Naive thymus-derived CD8-positive, alpha-beta T cell (primary cell): ENCODE measurements at regions of chr15 and their contacts with region 1.

Region 1: DNA sequence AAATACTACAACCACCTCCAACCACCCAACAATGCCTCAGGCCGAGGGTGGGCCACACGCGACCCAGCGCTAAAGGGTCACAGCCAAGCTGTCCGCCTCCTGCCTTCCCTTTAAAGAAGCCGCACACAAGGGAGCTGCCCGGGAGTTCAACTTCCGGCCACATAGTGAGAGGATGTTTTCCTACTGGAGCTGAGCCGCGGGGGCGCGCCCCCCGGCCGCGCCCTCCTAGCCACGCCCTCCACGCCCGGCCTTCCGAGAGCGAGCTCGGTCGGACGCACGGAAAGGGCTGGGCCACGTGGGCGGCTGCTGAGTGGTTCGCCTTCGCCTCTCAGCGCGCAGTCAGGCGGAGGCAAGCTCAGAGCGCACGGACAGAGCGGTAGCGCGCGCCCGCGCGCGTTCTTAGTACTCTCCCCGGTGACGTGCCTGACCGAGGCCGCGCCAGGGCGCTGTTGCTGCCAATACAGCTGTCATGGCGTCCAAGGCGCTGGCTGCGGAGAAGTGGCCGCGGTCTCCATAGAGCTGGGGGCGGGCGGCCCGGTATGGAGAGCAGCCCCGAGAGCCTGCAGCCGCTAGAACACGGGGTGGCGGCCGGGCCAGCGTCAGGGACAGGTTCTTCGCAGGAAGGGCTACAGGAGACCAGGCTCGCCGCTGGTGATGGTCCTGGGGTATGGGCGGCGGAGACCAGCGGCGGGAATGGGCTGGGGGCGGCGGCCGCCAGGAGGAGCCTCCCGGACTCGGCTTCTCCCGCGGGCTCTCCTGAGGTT is at the start of gene MINDY2:
- DNase-seq: peak; percentile 83 to 96 (median 90)
- ATAC-seq: peak; percentile 92 to 94
- H3K4me3 Mint-ChIP-seq: peak within 1 kb of the TSS in 2 of 10 donors; percentile 4 to 90
- H3K27ac Mint-ChIP-seq: peak within 1 kb of the TSS; percentile 87 to 97 (median 96)
- H3K4me1 Mint-ChIP-seq: peaks cover 6 to 20% (median 13%) of the 10 kb centered on the region in 4 donors
- H3K27me3 Mint-ChIP-seq: no peaks in the 10 kb centered on the region
- polyA plus RNA-seq, gene MINDY2: 8.5 to 9.5 (median 9.4) TPM

Region 2: DNA sequence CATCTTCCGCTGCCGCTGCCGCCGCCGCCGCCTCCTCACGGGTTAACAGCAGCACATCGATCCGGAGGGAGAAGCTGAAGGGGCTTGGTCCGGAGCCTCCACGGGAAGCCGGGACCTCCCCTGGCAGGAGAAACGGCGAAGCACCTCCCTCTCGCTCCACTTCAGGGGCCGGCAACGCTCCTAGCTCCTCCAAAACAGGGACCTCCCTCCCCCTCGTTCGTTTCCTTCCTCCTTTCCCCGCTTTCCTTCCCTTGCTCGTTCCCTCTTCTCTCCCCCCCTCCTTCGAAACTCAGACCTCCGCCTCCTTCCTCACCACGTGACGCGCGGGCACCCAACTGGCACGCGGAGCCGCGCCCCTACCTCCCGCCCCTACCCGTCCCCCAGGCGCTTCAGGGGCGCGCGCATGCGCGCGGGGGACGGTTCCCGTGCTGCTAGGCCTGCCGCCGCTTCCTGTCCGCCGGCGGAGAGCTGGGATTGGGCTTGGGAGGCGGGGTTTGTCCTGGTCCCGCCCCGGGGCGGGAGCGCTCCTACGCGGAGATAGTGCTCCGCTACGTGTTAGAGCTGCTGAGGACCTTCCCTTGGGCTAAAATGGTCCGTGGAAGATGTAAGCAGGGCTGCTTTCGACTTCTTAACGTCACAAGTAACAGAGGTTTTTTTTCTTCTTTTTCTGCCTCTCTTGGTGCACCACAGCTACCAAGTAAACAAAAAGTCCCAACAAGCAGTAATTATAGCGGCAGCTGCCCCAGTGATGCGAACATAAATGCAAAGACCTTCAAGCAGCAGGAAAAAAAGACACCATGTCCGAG is 21.3 kb before region 1 on chr15 and contains the start of gene ADAM10:
- POLR2A ChIA-PET with region 1: interaction called, 83 read pairs
- DNase-seq: peak; percentile 90 to 99 (median 96)
- ATAC-seq: peak; percentile 89 to 90
- H3K4me3 Mint-ChIP-seq: peak within 1 kb of the TSS; percentile 94 to 99 (median 96)
- H3K27ac Mint-ChIP-seq: peak within 1 kb of the TSS; percentile 68 to 98 (median 96)
- H3K4me1 Mint-ChIP-seq: peaks cover 15 to 46% (median 38%) of the 10 kb centered on the region in 4 donors
- H3K27me3 Mint-ChIP-seq: no peaks in the 10 kb centered on the region
- polyA plus RNA-seq, gene ADAM10: 96.4 to 108 (median 98.8) TPM

Region 3: GRCh38 chr15:59656897-59657634 is 886.0 kb after region 1 on chr15 and contains the start of gene GTF2A2:
- POLR2A ChIA-PET with region 1: interaction called, 11 read pairs
- DNase-seq: peak; percentile 87 to 95 (median 90)
- ATAC-seq: peak; percentile 97 to 98
- H3K4me3 Mint-ChIP-seq: peak within 1 kb of the TSS in 4 of 10 donors; percentile 22 to 63 (median 34)
- H3K27ac Mint-ChIP-seq: peak within 1 kb of the TSS in 2 of 10 donors; percentile 78 to 92
- H3K4me1 Mint-ChIP-seq: peaks cover 8 to 14% (median 11%) of the 10 kb centered on the region in 4 donors
- H3K27me3 Mint-ChIP-seq: no peaks in the 10 kb centered on the region
- polyA plus RNA-seq, gene GTF2A2: 97.2 to 136 (median 105) TPM